ENCODE measurements at regions of chr19 and their contacts with region 1.

Region 1: GRCh38 chr19:40750059-40750873 is at the start of gene ACTMAP:
- DNase-seq: peak; percentile 100
- ATAC-seq: peak; percentile 97
- total RNA-seq, gene ACTMAP: 6.4 TPM

Region 2: GRCh38 chr19:40690693-40691420 is 59.4 kb before region 1 on chr19:
- intact Hi-C with region 1: loop called (anchors 2 kb)
- DNase-seq: peak; percentile 98
- ATAC-seq: peak; percentile 92

Region 3: DNA sequence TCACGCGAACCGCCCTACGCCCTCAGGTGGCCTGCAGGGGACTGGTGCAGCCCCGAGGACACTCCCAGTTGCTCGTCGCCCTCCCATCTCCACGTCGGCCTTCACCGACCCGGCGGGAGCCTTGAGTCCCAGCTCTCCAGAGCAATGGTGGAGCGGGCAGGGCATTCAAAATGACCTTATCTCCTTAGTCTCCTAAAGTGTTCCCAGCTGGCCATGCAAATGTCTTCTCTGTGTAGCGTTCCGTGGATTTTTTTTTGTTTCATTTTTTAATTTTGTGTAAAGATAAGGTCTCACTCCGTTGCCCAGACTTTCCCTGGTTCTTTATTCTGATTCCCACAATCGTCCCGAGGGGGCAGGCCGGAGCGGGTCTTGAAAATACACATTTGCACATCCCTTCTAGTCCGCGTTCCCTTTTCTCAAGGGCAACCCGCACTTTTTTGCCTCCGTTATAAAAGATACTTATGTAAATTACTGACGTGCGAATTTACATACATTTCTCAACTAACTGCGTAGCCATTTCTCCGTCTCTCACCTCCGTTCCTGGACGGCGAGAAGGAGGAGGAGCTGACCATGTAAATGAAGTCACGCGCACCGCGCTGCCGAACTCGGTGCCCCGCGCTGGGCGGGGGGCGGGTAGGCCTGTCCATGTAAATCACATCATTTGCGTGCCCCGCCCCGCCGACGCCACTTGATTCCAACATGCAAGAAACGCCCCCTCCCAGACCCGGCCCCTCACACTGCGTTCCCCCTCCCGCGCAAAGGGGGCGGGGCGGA is 48.1 kb after region 1 on chr19:
- intact Hi-C with region 1: loop called (anchors 1 kb)
- DNase-seq: peak; percentile 100
- ATAC-seq: peak; percentile 91

Region 4: GRCh38 chr19:40813182-40813958 is 63.1 kb after region 1 on chr19:
- intact Hi-C with region 1: loop called (anchors 2 kb)
- DNase-seq: no peak
- ATAC-seq: no peak

Measured in Right ventricle myocardium inferior (tissue), 1 donor.